BJ (cell line): ENCODE measurements at regions of chr4 and their contacts with region 1.

Region 1: GRCh38 chr4:25993395-25994185 is 79.6 kb downstream of the SMIM20 start:
- DNase-seq: no peak
- H3K4me3 ChIP-seq: no peak overlapping the region
- H3K27me3 ChIP-seq: no peaks in the 10 kb centered on the region
- CTCF ChIP-seq: no peak

Region 2: DNA sequence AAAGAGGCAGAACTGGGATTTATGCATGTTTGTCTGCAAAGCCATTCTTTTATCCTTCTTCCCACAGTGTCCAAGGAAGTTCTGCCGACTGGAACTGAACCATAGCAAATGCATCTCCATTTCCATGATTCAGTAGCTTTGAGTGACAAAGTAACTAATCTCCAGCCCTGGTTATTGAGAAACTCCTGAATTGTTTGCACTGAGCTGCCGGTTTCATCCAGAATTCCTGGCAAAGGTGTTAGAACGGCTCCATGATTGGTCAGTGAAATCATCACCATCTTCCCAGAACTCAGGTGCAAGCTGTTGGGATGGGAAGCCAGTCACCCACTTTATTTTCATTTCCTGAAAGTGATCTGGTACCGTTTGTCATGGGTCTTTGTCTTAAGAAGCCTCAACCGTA is 384.9 kb before region 1 on chr4:
- CTCF ChIA-PET with region 1: no interaction called
- POLR2A ChIA-PET with region 1: no interaction called
- DNase-seq: no peak
- H3K4me3 ChIP-seq: no peak overlapping the region
- H3K27me3 ChIP-seq: no peaks in the 10 kb centered on the region; the same call in 1 of the 2 replicates
- CTCF ChIP-seq: no peak

Region 3: GRCh38 chr4:25928379-25929297 is 65.0 kb before region 1 on chr4:
- CTCF ChIA-PET with region 1: interaction called, 12 read pairs
- POLR2A ChIA-PET with region 1: no interaction called
- DNase-seq: no peak
- H3K4me3 ChIP-seq: no peak overlapping the region
- H3K27me3 ChIP-seq: no peaks in the 10 kb centered on the region
- CTCF ChIP-seq: no peak

Region 4: DNA sequence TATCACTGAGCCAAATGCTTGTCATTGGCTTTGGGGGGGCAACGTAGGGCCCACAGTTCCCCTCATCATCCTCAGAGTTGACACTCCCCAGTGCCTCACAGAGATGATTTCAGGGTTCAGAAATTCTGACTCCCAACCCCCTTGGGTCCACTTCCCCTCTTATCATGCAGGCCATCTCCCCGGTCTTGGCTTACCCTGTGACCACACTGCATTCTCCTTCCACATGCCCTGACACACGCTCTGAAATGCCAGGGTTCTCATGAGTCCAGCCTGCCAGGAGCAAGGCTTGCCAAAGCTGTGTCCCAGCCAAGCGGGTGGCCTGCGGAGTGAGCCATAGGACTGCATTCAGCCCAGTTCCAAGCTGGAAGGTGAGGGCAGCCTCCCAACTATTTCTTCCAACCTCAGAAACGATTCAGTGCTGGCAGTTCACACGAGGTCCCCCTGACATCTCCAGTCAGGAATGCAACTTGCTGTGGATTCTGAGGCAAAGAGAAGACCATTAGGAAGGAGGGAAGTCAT is 21.6 kb after region 1 on chr4:
- CTCF ChIA-PET with region 1: interaction called, 24 read pairs
- POLR2A ChIA-PET with region 1: no interaction called
- DNase-seq: peak; percentile 98
- H3K4me3 ChIP-seq: no peak overlapping the region
- H3K27me3 ChIP-seq: peaks cover 3% of the 10 kb centered on the region; the same call in 1 of the 2 replicates
- CTCF ChIP-seq: peak; percentile 7; the same call in 1 of the 2 replicates

Region 5: GRCh38 chr4:26061248-26061986 is 67.8 kb after region 1 on chr4:
- CTCF ChIA-PET with region 1: interaction called, 10 read pairs
- POLR2A ChIA-PET with region 1: no interaction called
- DNase-seq: no peak
- H3K4me3 ChIP-seq: no peak overlapping the region
- H3K27me3 ChIP-seq: no peaks in the 10 kb centered on the region
- CTCF ChIP-seq: peak; percentile 51

Region 6: DNA sequence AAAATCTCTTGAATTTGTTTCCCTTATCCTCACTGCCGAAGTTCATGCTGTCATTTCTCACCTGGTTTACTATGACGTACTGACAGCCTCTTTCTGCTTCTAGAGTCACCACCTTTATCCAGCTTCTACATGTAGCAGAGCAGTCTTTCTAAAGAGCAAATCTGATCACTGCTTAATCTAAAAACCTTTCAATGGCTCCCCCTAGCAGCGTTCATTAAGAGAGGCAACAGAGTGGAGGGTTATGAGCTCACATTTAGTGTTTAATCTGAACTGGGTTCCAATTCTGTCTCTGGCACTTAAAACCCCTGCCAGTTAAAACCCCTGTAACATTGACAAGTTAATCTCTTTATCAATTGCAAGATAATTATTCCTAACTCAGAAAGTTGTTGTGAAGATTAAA is 331.6 kb after region 1 on chr4:
- CTCF ChIA-PET with region 1: interaction called, 12 read pairs
- POLR2A ChIA-PET with region 1: no interaction called
- DNase-seq: no peak
- H3K4me3 ChIP-seq: no peak overlapping the region
- H3K27me3 ChIP-seq: no peaks in the 10 kb centered on the region
- CTCF ChIP-seq: peak; percentile 55